Dendritic cell treated with granulocyte-macrophage colony-stimulating factor and Interleukin-4, amounts not matched to agents 40 ng/mL and 50 ng/mL, for 4 days (primary cell): ENCODE measurements at regions of chrX and their contacts with region 1.

Region 1: DNA sequence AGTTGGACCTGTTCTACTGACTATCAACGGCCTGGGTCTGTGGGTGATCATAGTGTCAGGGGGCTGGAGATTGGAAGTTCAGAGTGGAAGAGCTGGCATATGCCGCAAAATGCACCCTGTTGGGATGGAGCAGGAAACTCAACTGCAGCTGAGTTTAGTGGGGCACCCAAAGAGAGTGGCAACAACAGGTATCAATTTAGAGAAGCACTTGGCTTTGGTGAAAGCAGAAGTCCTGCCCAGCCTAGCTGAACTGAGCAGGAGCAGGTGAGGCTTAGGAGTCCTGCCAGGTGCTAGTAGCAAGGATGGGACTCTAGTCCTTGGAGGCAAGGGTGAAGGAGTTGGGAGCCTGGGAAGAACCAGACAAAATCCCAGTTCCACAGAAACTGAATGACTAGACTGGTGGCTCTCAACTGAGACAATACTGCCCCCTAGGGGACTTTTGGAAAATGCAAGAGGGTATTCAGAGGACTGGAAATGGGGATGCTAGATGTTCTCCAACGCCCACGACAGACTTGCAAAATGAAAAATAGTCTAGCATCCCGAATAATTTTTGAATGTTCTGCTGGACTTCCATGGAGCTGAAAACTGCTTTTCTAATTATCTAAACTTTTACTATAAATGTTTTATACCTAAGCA is 49.4 kb downstream of the RTL9 start:
- H3K4me3 Mint-ChIP-seq: no peak overlapping the region
- H3K27ac Mint-ChIP-seq: no peak overlapping the region
- H3K4me1 Mint-ChIP-seq: peaks cover 2% of the 10 kb centered on the region
- H3K27me3 Mint-ChIP-seq: no peaks in the 10 kb centered on the region

Region 2: DNA sequence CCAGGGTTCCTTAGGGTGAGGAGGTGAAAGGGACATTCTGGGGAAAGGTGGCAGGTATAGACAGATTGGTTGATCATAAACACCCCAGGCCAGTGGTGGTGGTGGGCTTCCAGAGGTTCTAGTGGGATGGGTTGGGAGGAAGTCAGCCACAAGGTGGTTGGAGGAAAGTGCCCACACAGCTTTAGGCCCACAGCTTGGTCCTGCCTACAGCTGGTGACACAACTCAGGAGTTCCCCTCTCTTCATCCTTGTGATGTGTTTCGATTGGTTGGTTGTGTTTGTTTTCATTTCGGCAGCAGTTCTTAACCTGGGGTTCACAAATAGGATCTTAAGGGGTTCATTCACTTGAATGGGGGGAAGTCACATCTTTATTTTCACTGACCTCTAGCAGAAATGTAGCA is 248.2 kb before region 1 on chrX:
- intact Hi-C with region 1: loop called (anchors 1 kb)
- H3K4me3 Mint-ChIP-seq: no peak overlapping the region
- H3K27ac Mint-ChIP-seq: peak overlapping the region; percentile 69
- H3K4me1 Mint-ChIP-seq: peaks cover 37% of the 10 kb centered on the region
- H3K27me3 Mint-ChIP-seq: no peaks in the 10 kb centered on the region

Region 3: DNA sequence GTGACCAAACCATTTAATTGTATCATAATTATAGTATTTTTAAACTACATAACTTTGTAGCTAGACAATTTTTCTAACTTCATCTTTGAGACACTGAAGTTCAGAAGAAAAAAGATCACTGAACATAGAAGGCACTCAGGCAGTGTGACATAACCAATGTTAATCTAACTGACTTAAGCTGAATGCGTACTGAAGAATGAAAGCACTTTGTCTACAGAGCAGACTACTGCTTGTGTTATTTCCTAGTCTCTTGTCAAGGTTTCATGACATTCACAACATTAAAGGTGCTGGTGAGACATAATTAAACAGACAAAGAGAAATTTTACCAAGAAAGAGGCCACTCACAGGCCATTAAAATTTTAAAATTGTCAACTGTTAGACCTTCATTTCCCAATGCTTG is 103.7 kb before region 1 on chrX:
- intact Hi-C with region 1: no loop called
- H3K4me3 Mint-ChIP-seq: no peak overlapping the region
- H3K27ac Mint-ChIP-seq: no peak overlapping the region
- H3K4me1 Mint-ChIP-seq: no peaks in the 10 kb centered on the region
- H3K27me3 Mint-ChIP-seq: no peaks in the 10 kb centered on the region

Region 4: GRCh38 chrX:110317820-110318658 is 90.0 kb before region 1 on chrX and contains the start of gene AMMECR1:
- intact Hi-C with region 1: loop called (anchors 5 kb)
- H3K4me3 Mint-ChIP-seq: peak within 1 kb of the TSS; percentile 97
- H3K27ac Mint-ChIP-seq: peak within 1 kb of the TSS; percentile 95
- H3K4me1 Mint-ChIP-seq: no peaks in the 10 kb centered on the region
- H3K27me3 Mint-ChIP-seq: peaks cover 1% of the 10 kb centered on the region

Region 5: GRCh38 chrX:110374559-110374958 is 33.5 kb before region 1 on chrX:
- intact Hi-C with region 1: no loop called
- H3K4me3 Mint-ChIP-seq: no peak overlapping the region
- H3K27ac Mint-ChIP-seq: no peak overlapping the region
- H3K4me1 Mint-ChIP-seq: no peaks in the 10 kb centered on the region
- H3K27me3 Mint-ChIP-seq: no peaks in the 10 kb centered on the region

Region 6: DNA sequence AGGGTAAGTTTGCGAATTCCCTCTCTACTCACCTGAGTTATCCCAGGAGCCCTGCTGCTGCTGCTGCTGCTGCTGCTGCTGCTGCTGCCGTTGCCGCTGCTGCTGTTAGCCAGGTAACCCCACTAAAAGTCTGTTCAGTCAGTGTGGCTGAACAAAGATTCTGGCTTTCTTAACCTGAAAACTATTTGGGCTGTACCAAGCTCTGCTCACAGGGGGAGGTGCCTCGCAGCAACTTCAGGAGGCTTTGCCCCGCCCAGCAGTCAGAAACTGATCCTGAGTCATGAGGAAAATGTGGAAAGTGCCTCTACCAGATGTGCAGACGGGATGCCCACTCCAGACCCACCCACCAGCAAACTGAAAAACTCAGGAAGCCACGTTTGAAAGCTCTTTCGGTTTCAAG is 862.3 kb after region 1 on chrX and contains the start of gene CAPN6:
- intact Hi-C with region 1: no loop called
- H3K4me3 Mint-ChIP-seq: no peak within 1 kb of the TSS
- H3K27ac Mint-ChIP-seq: no peak within 1 kb of the TSS
- H3K4me1 Mint-ChIP-seq: no peaks in the 10 kb centered on the region
- H3K27me3 Mint-ChIP-seq: no peaks in the 10 kb centered on the region